ENCODE measurements at regions of chr1 and their contacts with region 1.

Region 1: GRCh38 chr1:154878371-154879022 is 8.4 kb upstream of the KCNN3 start:
- DNase-seq: peak; percentile 78 to 79
- H3K4me3 ChIP-seq: no peak overlapping the region
- H3K27ac ChIP-seq: no peak overlapping the region
- H3K4me1 ChIP-seq: peaks cover 0 to 3% of the 10 kb centered on the region in 2 donors
- H3K27me3 ChIP-seq: no peaks in the 10 kb centered on the region
- CTCF ChIP-seq: peak; percentile 48 to 90 (median 86)
- POLR2A ChIP-seq: no peak

Region 2: DNA sequence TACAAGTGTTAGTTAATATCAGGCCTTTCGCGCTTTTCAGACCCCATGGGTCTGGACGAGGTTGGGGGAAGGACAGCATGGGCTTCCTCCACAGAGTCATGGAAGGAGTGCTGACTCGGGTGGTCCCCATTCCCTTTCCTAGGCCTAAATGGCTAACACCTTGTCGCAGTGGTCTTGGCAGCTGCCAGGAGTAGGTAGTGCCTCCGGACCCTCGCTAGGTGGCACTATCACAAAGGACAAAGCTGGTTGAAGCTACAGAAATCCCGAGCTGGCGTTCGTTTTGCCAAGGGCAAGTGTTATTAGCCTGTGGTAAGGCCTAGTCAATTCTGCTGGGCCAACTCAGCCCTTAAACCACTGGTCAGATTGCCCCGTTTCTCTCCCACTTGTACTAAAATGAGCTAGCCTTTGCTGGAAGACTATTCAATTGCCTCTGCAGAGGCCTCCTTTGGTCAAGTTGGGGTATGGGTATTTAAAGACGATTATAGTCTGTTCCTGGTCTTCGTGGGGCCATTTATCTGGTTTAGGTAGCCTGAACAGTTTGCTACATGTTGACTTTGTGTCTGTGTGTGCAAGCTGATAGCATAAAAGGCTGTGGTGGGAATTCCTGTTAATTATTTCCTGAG is 318.9 kb before region 1 on chr1:
- intact Hi-C with region 1: loop called (anchors 5 kb)
- DNase-seq: peak; percentile 87 to 89
- H3K4me3 ChIP-seq: peak overlapping the region in 2 of 3 donors; percentile 33 to 38
- H3K27ac ChIP-seq: peak overlapping the region; percentile 76 to 89 (median 83)
- H3K4me1 ChIP-seq: peaks cover 20 to 28% of the 10 kb centered on the region in 2 donors
- H3K27me3 ChIP-seq: no peaks in the 10 kb centered on the region
- CTCF ChIP-seq: peak; percentile 84 to 97 (median 91)
- POLR2A ChIP-seq: no peak

Region 3: GRCh38 chr1:154669464-154670282 is 208.8 kb before region 1 on chr1:
- intact Hi-C with region 1: loop called (anchors 5 kb)
- DNase-seq: peak; percentile 79 to 82
- H3K4me3 ChIP-seq: no peak overlapping the region
- H3K27ac ChIP-seq: no peak overlapping the region
- H3K4me1 ChIP-seq: no peaks in the 10 kb centered on the region
- H3K27me3 ChIP-seq: no peaks in the 10 kb centered on the region
- CTCF ChIP-seq: peak; percentile 17 to 92 (median 79)
- POLR2A ChIP-seq: no peak

Region 4: DNA sequence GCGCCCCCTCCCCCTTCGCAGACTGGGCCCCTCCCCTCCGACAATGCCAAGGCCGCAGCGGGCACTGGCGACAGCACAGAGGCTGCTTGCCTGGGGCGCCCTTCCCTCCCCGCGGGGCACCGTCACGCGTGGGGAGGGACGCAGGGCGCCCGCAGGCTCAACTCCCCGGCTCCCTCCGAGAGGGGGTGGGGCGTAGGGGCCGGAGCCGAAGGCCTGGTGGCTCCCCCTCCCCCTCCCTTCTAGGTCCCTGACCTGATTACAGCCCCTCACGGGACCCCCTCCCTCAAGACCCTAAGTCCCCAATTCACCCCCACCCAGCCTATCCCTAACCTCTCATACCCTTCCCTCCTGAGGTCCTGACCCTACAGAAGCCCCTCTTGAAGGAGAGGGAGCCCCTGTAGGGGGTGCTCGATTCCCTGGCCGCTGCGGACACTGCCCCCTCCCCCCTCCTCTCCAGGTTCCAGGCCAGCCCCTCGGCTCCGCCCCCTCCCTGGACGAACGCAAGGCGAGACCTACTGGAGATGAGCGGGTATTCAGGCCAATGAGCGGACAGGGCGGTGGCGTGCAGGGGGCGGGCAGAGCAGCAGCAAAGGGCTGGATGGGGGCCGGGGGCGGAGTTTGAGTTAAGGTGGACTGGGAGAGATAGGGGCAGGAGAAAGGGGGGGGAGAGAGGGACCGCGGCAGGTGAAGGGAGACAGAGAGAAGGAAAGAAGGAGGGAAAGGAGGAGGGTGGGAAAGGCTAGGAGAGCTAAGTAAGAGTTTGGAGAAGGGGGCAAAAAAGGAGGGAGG is 123.4 kb after region 1 on chr1:
- intact Hi-C with region 1: no loop called
- DNase-seq: peak; percentile 100
- H3K4me3 ChIP-seq: peak overlapping the region; percentile 23 to 86 (median 41)
- H3K27ac ChIP-seq: peak overlapping the region; percentile 86 to 99 (median 95)
- H3K4me1 ChIP-seq: peaks cover 43 to 45% of the 10 kb centered on the region in 2 donors
- H3K27me3 ChIP-seq: no peaks in the 10 kb centered on the region
- CTCF ChIP-seq: peak in 5 of 6 experiments; percentile 19 to 44 (median 38)
- POLR2A ChIP-seq: peak; percentile 69 to 91